ENCODE measurements at regions of chr17 and their contacts with region 1.

Region 1: GRCh38 chr17:73255671-73256181 is 6.0 kb downstream of the CPSF4L start:
- DNase-seq: peak; percentile 62 to 74
- ATAC-seq: peak; percentile 82 to 90
- H3K4me3 ChIP-seq: no peak overlapping the region
- H3K27ac ChIP-seq: peak overlapping the region in 1 of 2 experiments; percentile 11; a peak in 1 of 6 replicates
- H3K4me1 ChIP-seq: no peaks in the 10 kb centered on the region
- CTCF ChIP-seq: peak; percentile 100
- EP300 ChIP-seq: no peak
- POLR2A ChIP-seq: no peak
- RAD21 ChIP-seq: peak; percentile 100

Region 2: GRCh38 chr17:73231841-73232586 is 23.7 kb before region 1 on chr17:
- CTCF ChIA-PET with region 1: interaction called, 26 read pairs
- POLR2A ChIA-PET with region 1: no interaction called
- DNase-seq: peak; percentile 94 to 95
- ATAC-seq: peak; percentile 84 to 95
- H3K4me3 ChIP-seq: peak overlapping the region; percentile 88
- H3K27ac ChIP-seq: peak overlapping the region; percentile 89 to 95
- H3K4me1 ChIP-seq: peaks cover 44% of the 10 kb centered on the region
- CTCF ChIP-seq: no peak
- EP300 ChIP-seq: no peak
- POLR2A ChIP-seq: peak; percentile 88
- RAD21 ChIP-seq: peak in 1 of 2 experiments; percentile 1; a peak in 1 of 5 replicates

Region 3: GRCh38 chr17:73278465-73279453 is 23.0 kb after region 1 on chr17:
- CTCF ChIA-PET with region 1: interaction called, 72 read pairs
- POLR2A ChIA-PET with region 1: no interaction called
- DNase-seq: no peak
- ATAC-seq: peak in 1 of 2 experiments; percentile 17; a peak in 3 of 6 replicates
- H3K4me3 ChIP-seq: no peak overlapping the region
- H3K27ac ChIP-seq: peak overlapping the region in 1 of 2 experiments; percentile 12; a peak in 1 of 6 replicates
- H3K4me1 ChIP-seq: peaks cover 7% of the 10 kb centered on the region; the same call in 2 of the 3 replicates
- CTCF ChIP-seq: no peak
- EP300 ChIP-seq: no peak
- POLR2A ChIP-seq: no peak
- RAD21 ChIP-seq: no peak

Region 4: GRCh38 chr17:73304971-73305812 is 49.5 kb after region 1 on chr17:
- CTCF ChIA-PET with region 1: interaction called, 77 read pairs
- POLR2A ChIA-PET with region 1: interaction called, 3 read pairs
- DNase-seq: peak; percentile 71 to 82
- ATAC-seq: peak; percentile 55 to 60
- H3K4me3 ChIP-seq: peak overlapping the region; percentile 33
- H3K27ac ChIP-seq: peak overlapping the region; percentile 95 to 96
- H3K4me1 ChIP-seq: peaks cover 82% of the 10 kb centered on the region
- CTCF ChIP-seq: peak; percentile 24; the same call in 2 of the 3 replicates
- EP300 ChIP-seq: no peak
- POLR2A ChIP-seq: peak; percentile 24; the same call in 1 of the 2 replicates
- RAD21 ChIP-seq: peak; percentile 39 to 46; a peak in 3 of 5 replicates

Region 5: GRCh38 chr17:73342050-73342522 is 86.4 kb after region 1 on chr17:
- CTCF ChIA-PET with region 1: interaction called, 53 read pairs
- POLR2A ChIA-PET with region 1: no interaction called
- DNase-seq: peak; percentile 93
- ATAC-seq: peak; percentile 71 to 80
- H3K4me3 ChIP-seq: no peak overlapping the region
- H3K27ac ChIP-seq: peak overlapping the region; percentile 86 to 93
- H3K4me1 ChIP-seq: peaks cover 55% of the 10 kb centered on the region
- CTCF ChIP-seq: no peak
- EP300 ChIP-seq: peak in 1 of 2 experiments; percentile 54; a peak in 1 of 5 replicates
- POLR2A ChIP-seq: no peak
- RAD21 ChIP-seq: no peak

Region 6: DNA sequence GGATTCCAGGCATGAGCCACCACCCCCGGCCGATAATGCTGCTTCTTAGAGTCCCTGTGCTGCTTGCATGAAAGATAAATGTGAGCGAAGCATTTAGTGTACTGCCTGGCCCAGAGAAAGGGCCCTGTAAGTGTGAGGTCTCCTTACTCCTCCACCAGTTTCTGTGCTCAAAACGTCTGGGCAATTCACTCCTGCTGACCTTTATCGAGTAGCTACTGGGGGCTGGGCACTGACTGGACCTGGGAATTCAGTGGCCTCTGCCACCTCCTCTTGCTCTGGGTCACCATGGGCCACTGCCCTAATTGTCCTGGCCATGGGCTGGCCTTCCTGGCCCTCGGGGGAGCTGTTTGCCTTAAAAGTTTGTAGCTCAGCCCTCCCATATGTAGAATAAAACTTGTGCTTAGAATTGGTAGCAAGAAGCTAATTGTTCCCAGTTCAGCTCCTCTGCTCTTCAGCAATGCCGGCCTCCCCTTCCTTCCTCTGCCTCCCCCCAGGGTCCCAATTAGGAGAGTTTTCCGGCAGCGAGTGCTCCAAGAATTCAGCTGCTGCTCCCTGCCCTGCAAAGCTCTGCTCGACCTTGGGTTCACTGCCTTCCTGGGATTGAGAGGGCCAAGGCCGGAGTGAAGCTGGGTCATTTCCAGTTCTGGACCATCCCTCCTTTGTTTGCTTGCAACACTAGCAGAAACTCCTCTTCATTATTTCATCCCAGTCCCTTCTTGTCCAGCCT is 155.0 kb after region 1 on chr17:
- CTCF ChIA-PET with region 1: interaction called, 11 read pairs
- POLR2A ChIA-PET with region 1: no interaction called
- DNase-seq: no peak
- ATAC-seq: peak in 1 of 2 experiments; percentile 26; a peak in 1 of 6 replicates
- H3K4me3 ChIP-seq: no peak overlapping the region
- H3K27ac ChIP-seq: no peak overlapping the region
- H3K4me1 ChIP-seq: no peaks in the 10 kb centered on the region
- CTCF ChIP-seq: no peak
- EP300 ChIP-seq: no peak
- POLR2A ChIP-seq: no peak
- RAD21 ChIP-seq: no peak